ENCODE measurements at regions of chr5 and their contacts with region 1.

Region 1: DNA sequence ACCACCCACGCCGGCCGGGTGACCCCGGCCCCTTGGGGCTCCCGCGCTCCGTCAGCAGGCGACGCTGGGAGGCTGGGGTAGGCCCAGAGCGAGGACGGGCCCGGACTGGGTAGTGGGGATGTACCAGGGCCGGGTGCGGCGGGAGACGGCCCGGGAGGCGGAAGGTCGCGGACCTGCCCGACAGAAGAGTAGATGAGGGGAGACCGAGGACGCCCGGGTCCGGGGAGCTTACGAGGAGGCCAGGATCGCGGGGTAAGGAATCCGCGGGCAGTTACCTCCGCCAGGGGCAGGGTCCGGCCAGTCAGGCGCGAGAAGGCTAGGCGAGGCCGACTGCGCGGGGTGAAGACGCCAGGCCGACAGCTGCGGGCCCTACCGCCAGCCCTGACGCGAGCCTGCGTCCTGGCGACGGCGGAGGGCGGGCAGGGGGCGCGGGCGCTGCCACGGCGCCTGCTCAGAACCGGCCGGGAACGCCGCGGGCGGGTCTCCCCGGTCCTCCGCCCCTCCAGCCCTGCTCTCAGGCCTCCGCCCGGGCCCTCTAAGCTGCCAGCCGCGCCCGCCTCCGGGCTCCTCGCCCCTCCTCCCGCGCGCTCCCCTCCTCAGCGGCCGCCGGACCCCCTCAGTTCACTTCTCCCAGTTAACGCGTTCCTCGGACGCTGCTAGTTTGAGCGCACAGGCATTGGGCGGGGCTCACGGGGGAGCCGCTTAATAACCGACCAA is at the start of gene CPLANE1:
- DNase-seq: peak; percentile 5 to 76 (median 54)
- ATAC-seq: peak; percentile 80
- H3K4me3 ChIP-seq: peak within 1 kb of the TSS; percentile 87 to 91
- H3K4me3 Mint-ChIP-seq: peak within 1 kb of the TSS; percentile 90
- H3K27ac ChIP-seq: peak within 1 kb of the TSS; percentile 63 to 73
- H3K27ac Mint-ChIP-seq: peak within 1 kb of the TSS; percentile 88
- H3K4me1 ChIP-seq: peaks cover 14% of the 10 kb centered on the region
- H3K4me1 Mint-ChIP-seq: peaks cover 12% of the 10 kb centered on the region
- H3K27me3 ChIP-seq: no peaks in the 10 kb centered on the region
- H3K27me3 Mint-ChIP-seq: no peaks in the 10 kb centered on the region
- CTCF ChIP-seq: no peak
- total RNA-seq, gene CPLANE1: 4.2 to 4.3 TPM

Region 2: GRCh38 chr5:37283214-37283820 is 34.2 kb after region 1 on chr5:
- CTCF ChIA-PET with region 1: no interaction called
- POLR2A ChIA-PET with region 1: no interaction called
- intact Hi-C with region 1: loop called in 1 of 2 experiments (anchors 5 kb)
- DNase-seq: no peak
- ATAC-seq: no peak
- H3K4me3 ChIP-seq: no peak overlapping the region
- H3K4me3 Mint-ChIP-seq: no peak overlapping the region
- H3K27ac ChIP-seq: no peak overlapping the region
- H3K27ac Mint-ChIP-seq: no peak overlapping the region
- H3K4me1 ChIP-seq: no peaks in the 10 kb centered on the region
- H3K4me1 Mint-ChIP-seq: no peaks in the 10 kb centered on the region
- H3K27me3 ChIP-seq: no peaks in the 10 kb centered on the region
- H3K27me3 Mint-ChIP-seq: peaks cover 2% of the 10 kb centered on the region
- CTCF ChIP-seq: no peak

Region 3: GRCh38 chr5:37370864-37371726 is 122.0 kb after region 1 on chr5 and contains the start of gene NUP155:
- CTCF ChIA-PET with region 1: no interaction called
- POLR2A ChIA-PET with region 1: no interaction called
- intact Hi-C with region 1: loop called in 1 of 2 experiments (anchors 2 kb)
- DNase-seq: peak; percentile 71 to 96 (median 88)
- ATAC-seq: peak; percentile 93
- H3K4me3 ChIP-seq: peak within 1 kb of the TSS; percentile 92 to 95
- H3K4me3 Mint-ChIP-seq: peak within 1 kb of the TSS; percentile 97
- H3K27ac ChIP-seq: peak within 1 kb of the TSS; percentile 88 to 93
- H3K27ac Mint-ChIP-seq: peak within 1 kb of the TSS; percentile 97
- H3K4me1 ChIP-seq: peaks cover 18% of the 10 kb centered on the region
- H3K4me1 Mint-ChIP-seq: peaks cover 32% of the 10 kb centered on the region
- H3K27me3 ChIP-seq: no peaks in the 10 kb centered on the region
- H3K27me3 Mint-ChIP-seq: no peaks in the 10 kb centered on the region
- CTCF ChIP-seq: no peak
- total RNA-seq, gene NUP155: 22.9 to 27.4 TPM

Measured in CD8-positive, alpha-beta T cell (primary cell).